IMR-90 (cell line): ENCODE measurements at regions of chr12 and their contacts with region 1.

Region 1: GRCh38 chr12:89345830-89346740 is 6.2 kb downstream of the DUSP6 start:
- DNase-seq: peak; percentile 64
- ATAC-seq: peak; percentile 27
- H3K4me3 ChIP-seq: no peak overlapping the region
- H3K27ac ChIP-seq: no peak overlapping the region
- H3K4me1 ChIP-seq: peaks cover 9% of the 10 kb centered on the region
- H3K27me3 ChIP-seq: no peaks in the 10 kb centered on the region
- CTCF ChIP-seq: no peak
- POLR2A ChIP-seq: no peak; the same call in 1 of the 2 replicates
- RAD21 ChIP-seq: no peak

Region 2: GRCh38 chr12:89059721-89060541 is 286.2 kb before region 1 on chr12:
- CTCF ChIA-PET with region 1: interaction called, 3 read pairs
- POLR2A ChIA-PET with region 1: no interaction called
- dilution Hi-C with region 1: no loop called
- in situ Hi-C with region 1: loop called (anchors 5 kb)
- intact Hi-C with region 1: loop called (anchors 5 kb)
- DNase-seq: peak; percentile 12
- ATAC-seq: no peak
- H3K4me3 ChIP-seq: no peak overlapping the region
- H3K27ac ChIP-seq: no peak overlapping the region
- H3K4me1 ChIP-seq: no peaks in the 10 kb centered on the region; the same call in 1 of the 2 replicates
- H3K27me3 ChIP-seq: no peaks in the 10 kb centered on the region
- CTCF ChIP-seq: no peak
- POLR2A ChIP-seq: no peak
- RAD21 ChIP-seq: no peak

Region 3: GRCh38 chr12:89225808-89226411 is 120.2 kb before region 1 on chr12:
- CTCF ChIA-PET with region 1: no interaction called
- POLR2A ChIA-PET with region 1: interaction called, 3 read pairs
- dilution Hi-C with region 1: no loop called
- in situ Hi-C with region 1: no loop called
- intact Hi-C with region 1: loop called (anchors 5 kb)
- DNase-seq: peak; percentile 93
- ATAC-seq: peak; percentile 91
- H3K4me3 ChIP-seq: peak overlapping the region; percentile 25; the same call in 1 of the 2 replicates
- H3K27ac ChIP-seq: peak overlapping the region; percentile 54
- H3K4me1 ChIP-seq: peaks cover 4% of the 10 kb centered on the region
- H3K27me3 ChIP-seq: no peaks in the 10 kb centered on the region
- CTCF ChIP-seq: 0 out of 2 replicates have a peak, but pooled peaks have one; percentile 2
- POLR2A ChIP-seq: no peak
- RAD21 ChIP-seq: no peak

Region 4: GRCh38 chr12:89244536-89244935 is 101.5 kb before region 1 on chr12:
- CTCF ChIA-PET with region 1: no interaction called
- POLR2A ChIA-PET with region 1: interaction called, 16 read pairs
- dilution Hi-C with region 1: no loop called
- in situ Hi-C with region 1: no loop called
- intact Hi-C with region 1: no loop called
- DNase-seq: peak; percentile 64
- ATAC-seq: peak; percentile 68
- H3K4me3 ChIP-seq: no peak overlapping the region; the same call in 1 of the 2 replicates
- H3K27ac ChIP-seq: peak overlapping the region; percentile 29
- H3K4me1 ChIP-seq: peaks cover 11% of the 10 kb centered on the region
- H3K27me3 ChIP-seq: no peaks in the 10 kb centered on the region
- CTCF ChIP-seq: no peak
- POLR2A ChIP-seq: no peak
- RAD21 ChIP-seq: no peak